ENCODE measurements at regions of chr14 and their contacts with region 1.

Region 1: GRCh38 chr14:100221533-100222223 is 17.3 kb upstream of the YY1 start:
- DNase-seq: peak; percentile 67
- CTCF ChIP-seq: no peak

Region 2: GRCh38 chr14:100155042-100155846 is 66.4 kb before region 1 on chr14:
- CTCF ChIA-PET with region 1: no interaction called
- POLR2A ChIA-PET with region 1: no interaction called
- DNase-seq: no peak
- CTCF ChIP-seq: peak; percentile 55

Region 3: DNA sequence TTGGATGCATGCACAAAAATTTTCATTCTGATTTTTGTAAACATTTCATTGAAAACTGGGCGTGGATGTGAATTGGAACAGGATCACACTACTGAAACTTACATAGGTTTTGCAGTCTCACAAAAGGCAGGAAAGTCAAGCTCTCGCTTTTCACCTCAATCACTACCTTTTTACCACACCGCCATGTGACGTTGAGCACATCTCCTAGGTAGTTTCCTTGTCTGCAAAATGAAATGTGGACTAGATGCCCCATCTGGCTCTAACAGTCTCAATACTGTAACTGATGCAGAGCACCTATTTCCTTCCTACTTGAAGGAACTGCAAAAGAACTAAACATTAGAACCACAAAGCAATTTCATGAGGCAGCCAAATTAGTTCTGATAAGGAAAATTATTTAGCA is 12.8 kb after region 1 on chr14:
- CTCF ChIA-PET with region 1: interaction called, 48 read pairs
- POLR2A ChIA-PET with region 1: no interaction called
- DNase-seq: no peak
- CTCF ChIP-seq: no peak

Region 4: DNA sequence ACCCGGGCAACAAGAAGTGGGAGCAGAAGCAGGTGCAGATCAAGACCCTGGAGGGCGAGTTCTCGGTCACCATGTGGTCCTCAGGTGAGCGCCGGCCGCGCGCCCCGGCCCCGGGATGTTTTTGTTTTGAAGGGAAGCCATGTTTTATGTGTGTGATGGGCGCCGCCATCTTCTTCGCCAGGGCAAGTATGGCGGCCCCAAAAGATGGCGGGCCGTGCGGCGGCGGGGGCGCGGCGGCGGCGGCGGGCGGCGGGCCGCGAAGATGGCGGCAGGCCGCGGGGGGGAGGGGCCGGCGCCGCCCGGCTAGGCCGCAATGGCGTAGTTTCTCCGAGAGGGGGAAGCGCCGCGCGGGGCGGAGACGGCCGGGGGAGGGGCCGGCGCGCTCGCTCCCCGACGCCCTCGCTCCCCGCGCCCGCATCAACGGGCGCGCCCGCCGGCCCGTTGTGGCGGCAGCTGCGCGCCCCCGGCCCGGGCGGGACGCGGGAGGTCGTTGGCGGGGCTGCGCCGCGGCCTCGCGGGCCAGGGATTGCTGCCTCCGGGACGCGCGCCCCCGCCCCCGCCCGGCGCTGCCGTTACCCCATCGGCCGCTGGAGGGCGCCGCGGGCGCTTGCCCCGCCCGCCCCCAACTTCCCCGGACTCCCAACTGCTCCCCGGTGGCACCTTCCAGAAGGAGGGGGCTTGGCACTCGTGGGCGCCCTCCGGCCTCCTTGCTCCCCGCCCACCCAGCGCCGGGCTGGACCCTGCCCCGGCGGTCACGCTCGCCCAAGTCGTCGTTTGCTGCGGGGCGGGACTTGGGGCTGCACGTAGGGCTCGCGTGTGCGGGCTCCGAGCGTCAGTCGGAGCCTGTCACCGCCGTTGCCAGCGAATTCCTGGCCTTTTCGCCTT is 18.4 kb after region 1 on chr14:
- CTCF ChIA-PET with region 1: interaction called, 48 read pairs
- POLR2A ChIA-PET with region 1: interaction called, 3 read pairs
- DNase-seq: peak; percentile 88
- CTCF ChIP-seq: peak; percentile 60